ENCODE measurements at regions of chr22 and their contacts with region 1.

Region 1: GRCh38 chr22:40950962-40951794 is at the start of gene RBX1:
- DNase-seq: peak; percentile 97 to 100 (median 99)
- ATAC-seq: peak; percentile 75
- H3K4me3 ChIP-seq: peak within 1 kb of the TSS; percentile 96
- H3K4me3 Mint-ChIP-seq: peak within 1 kb of the TSS; percentile 95
- H3K27ac ChIP-seq: peak within 1 kb of the TSS; percentile 98 to 100
- H3K27ac Mint-ChIP-seq: peak within 1 kb of the TSS; percentile 98
- H3K4me1 ChIP-seq: peaks cover 34% of the 10 kb centered on the region
- H3K4me1 Mint-ChIP-seq: peaks cover 40% of the 10 kb centered on the region
- H3K27me3 ChIP-seq: no peaks in the 10 kb centered on the region
- H3K27me3 Mint-ChIP-seq: no peaks in the 10 kb centered on the region
- CTCF ChIP-seq: no peak
- total RNA-seq, gene RBX1: 19.8 to 21.6 TPM

Region 2: DNA sequence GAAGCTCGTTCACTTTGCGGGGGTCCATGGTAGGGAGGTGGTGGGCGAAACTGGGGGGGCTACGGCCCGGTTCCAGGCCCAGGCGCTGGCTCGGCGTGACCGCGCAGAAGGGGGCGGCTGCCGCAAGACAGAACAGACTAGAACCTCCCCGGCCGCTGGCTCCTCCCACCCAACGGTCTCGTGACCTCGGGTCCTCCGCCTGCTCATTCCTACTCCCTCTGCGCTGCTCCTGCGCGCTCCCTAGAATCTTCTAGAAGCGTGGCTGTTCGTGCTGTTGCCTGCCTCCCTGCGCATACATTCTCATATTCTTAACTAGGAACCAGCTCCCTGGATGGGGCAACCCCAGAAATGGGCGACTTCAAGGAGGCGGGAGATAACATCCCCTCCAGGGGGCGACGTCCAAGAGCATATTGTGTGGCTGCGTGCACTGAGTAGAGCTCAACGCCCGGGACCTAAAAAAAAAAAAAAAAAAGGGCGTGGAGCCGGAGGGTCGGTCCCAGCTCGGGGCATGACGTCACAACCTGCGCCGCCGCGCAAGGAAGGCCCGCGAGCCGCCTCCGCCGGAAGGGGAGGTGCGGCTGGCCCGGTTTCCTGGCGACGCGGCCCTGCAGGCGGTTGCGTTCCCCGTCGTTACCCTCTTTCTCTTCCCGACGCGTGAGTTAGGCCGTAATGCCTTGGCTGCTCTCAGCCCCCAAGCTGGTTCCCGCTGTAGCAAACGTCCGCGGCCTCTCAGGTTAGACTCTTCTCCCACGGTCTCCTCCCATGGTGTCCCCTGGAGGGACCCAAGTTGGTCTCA is 94.5 kb before region 1 on chr22 and contains the starts of genes ST13 and XPNPEP3:
- CTCF ChIA-PET with region 1: no interaction called
- POLR2A ChIA-PET with region 1: interaction called, 25 read pairs
- intact Hi-C with region 1: loop called (anchors 1 to 2 kb)
- DNase-seq: peak; percentile 94 to 99 (median 96)
- ATAC-seq: peak; percentile 86
- H3K4me3 ChIP-seq: peak within 1 kb of the TSS; percentile 96
- H3K4me3 Mint-ChIP-seq: peak within 1 kb of the TSS; percentile 100
- H3K27ac ChIP-seq: peak within 1 kb of the TSS; percentile 95 to 99
- H3K27ac Mint-ChIP-seq: peak within 1 kb of the TSS; percentile 100
- H3K4me1 ChIP-seq: peaks cover 22% of the 10 kb centered on the region
- H3K4me1 Mint-ChIP-seq: peaks cover 80% of the 10 kb centered on the region
- H3K27me3 ChIP-seq: no peaks in the 10 kb centered on the region
- H3K27me3 Mint-ChIP-seq: no peaks in the 10 kb centered on the region
- CTCF ChIP-seq: peak; percentile 38
- total RNA-seq, gene ST13: 164 to 170 TPM
- total RNA-seq, gene XPNPEP3: 16.3 to 17.9 TPM

Region 3: GRCh38 chr22:40890881-40891280 is 60.3 kb before region 1 on chr22:
- CTCF ChIA-PET with region 1: no interaction called
- POLR2A ChIA-PET with region 1: no interaction called
- intact Hi-C with region 1: no loop called
- DNase-seq: no peak
- ATAC-seq: no peak
- H3K4me3 ChIP-seq: no peak overlapping the region
- H3K4me3 Mint-ChIP-seq: no peak overlapping the region
- H3K27ac ChIP-seq: no peak overlapping the region
- H3K27ac Mint-ChIP-seq: no peak overlapping the region
- H3K4me1 ChIP-seq: no peaks in the 10 kb centered on the region
- H3K4me1 Mint-ChIP-seq: no peaks in the 10 kb centered on the region
- H3K27me3 ChIP-seq: no peaks in the 10 kb centered on the region
- H3K27me3 Mint-ChIP-seq: no peaks in the 10 kb centered on the region
- CTCF ChIP-seq: no peak

Region 4: GRCh38 chr22:41022470-41023298 is 71.5 kb after region 1 on chr22:
- CTCF ChIA-PET with region 1: no interaction called
- POLR2A ChIA-PET with region 1: interaction called, 93 read pairs
- intact Hi-C with region 1: loop called (anchors 1 to 5 kb)
- DNase-seq: peak; percentile 62 to 89 (median 76)
- ATAC-seq: peak; percentile 79
- H3K4me3 ChIP-seq: peak overlapping the region; percentile 63
- H3K4me3 Mint-ChIP-seq: peak overlapping the region; percentile 86
- H3K27ac ChIP-seq: peak overlapping the region; percentile 64 to 80
- H3K27ac Mint-ChIP-seq: peak overlapping the region; percentile 63
- H3K4me1 ChIP-seq: peaks cover 21% of the 10 kb centered on the region
- H3K4me1 Mint-ChIP-seq: peaks cover 20% of the 10 kb centered on the region
- H3K27me3 ChIP-seq: no peaks in the 10 kb centered on the region
- H3K27me3 Mint-ChIP-seq: no peaks in the 10 kb centered on the region
- CTCF ChIP-seq: no peak

Region 5: DNA sequence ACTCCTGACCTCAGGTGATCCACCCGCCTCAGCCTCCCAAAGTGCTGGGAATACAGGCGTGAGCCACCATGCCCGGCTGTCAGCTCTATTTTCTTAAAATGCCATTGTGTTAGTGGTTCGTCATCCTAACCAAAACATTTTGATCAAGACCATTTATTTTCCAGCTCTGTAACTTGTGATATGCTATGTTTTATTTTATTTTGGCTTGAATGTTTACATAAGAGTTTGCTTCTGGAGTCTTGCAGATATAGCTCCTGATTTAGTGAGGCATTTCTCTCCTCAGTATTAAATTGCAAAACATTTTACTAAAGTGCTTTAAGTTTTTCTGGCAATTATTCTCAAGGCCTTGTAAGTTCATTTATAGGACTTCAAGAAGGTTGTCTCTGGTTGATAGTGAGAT is 145.7 kb after region 1 on chr22:
- CTCF ChIA-PET with region 1: interaction called, 3 read pairs
- POLR2A ChIA-PET with region 1: interaction called, 187 read pairs
- intact Hi-C with region 1: no loop called
- DNase-seq: no peak
- ATAC-seq: no peak
- H3K4me3 ChIP-seq: no peak overlapping the region
- H3K4me3 Mint-ChIP-seq: peak overlapping the region; percentile 77
- H3K27ac ChIP-seq: no peak overlapping the region
- H3K27ac Mint-ChIP-seq: peak overlapping the region; percentile 75
- H3K4me1 ChIP-seq: peaks cover 39% of the 10 kb centered on the region
- H3K4me1 Mint-ChIP-seq: peaks cover 69% of the 10 kb centered on the region
- H3K27me3 ChIP-seq: no peaks in the 10 kb centered on the region
- H3K27me3 Mint-ChIP-seq: no peaks in the 10 kb centered on the region
- CTCF ChIP-seq: no peak

Region 6: DNA sequence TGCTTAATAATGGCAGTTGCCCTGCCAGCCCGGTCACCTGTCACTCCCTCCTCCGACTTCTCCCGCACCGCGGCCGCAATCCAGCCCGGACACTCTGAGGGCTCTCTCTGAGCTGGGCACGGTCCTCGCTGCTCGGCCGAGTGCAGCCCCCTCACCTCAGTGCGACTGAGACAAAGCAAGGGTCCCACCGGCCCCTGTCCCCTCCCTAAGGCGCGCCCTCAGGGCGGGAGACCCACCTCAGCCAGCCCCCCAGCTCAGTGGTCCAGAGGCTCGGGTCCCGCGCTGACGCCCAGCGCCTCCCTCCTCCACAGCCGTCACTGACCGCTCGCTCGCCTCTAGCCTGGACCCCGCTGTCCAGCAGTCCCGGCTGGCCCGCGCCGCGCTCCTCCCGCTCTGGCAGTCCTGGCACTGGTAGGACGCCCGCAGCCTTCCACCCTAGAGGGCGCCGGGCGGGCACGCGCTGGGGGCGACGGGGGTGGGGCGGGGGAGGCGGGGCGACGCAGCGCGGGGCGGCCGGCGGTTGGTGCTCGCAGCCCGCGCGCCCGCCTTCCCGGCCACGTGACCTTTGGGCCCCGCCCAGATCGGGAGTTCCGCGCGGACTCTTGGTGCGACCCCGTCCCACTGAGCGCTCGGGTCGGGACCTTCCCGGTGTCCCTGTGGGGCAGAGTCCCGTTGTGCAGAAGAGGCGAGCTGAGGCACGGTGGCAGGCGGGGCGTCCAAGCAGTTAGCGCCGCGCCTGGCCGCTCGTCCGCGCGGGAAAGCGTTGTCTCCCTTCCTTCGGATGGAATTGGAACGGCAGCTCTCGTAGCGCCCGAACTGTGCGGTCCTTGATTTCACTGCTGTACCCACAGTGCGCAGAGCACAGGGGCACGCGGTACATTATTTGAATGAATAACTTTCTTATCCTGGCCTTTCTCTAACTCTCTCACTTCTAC is 246.1 kb after region 1 on chr22:
- CTCF ChIA-PET with region 1: interaction called, 4 read pairs
- POLR2A ChIA-PET with region 1: no interaction called
- intact Hi-C with region 1: loop called in 1 of 2 experiments (anchors 2 kb)
- DNase-seq: peak; percentile 62 to 93 (median 76)
- ATAC-seq: peak; percentile 85
- H3K4me3 ChIP-seq: peak overlapping the region; percentile 92
- H3K4me3 Mint-ChIP-seq: peak overlapping the region; percentile 95
- H3K27ac ChIP-seq: no peak overlapping the region
- H3K27ac Mint-ChIP-seq: peak overlapping the region; percentile 28
- H3K4me1 ChIP-seq: peaks cover 19% of the 10 kb centered on the region
- H3K4me1 Mint-ChIP-seq: peaks cover 14% of the 10 kb centered on the region
- H3K27me3 ChIP-seq: no peaks in the 10 kb centered on the region
- H3K27me3 Mint-ChIP-seq: no peaks in the 10 kb centered on the region
- CTCF ChIP-seq: no peak

Region 7: DNA sequence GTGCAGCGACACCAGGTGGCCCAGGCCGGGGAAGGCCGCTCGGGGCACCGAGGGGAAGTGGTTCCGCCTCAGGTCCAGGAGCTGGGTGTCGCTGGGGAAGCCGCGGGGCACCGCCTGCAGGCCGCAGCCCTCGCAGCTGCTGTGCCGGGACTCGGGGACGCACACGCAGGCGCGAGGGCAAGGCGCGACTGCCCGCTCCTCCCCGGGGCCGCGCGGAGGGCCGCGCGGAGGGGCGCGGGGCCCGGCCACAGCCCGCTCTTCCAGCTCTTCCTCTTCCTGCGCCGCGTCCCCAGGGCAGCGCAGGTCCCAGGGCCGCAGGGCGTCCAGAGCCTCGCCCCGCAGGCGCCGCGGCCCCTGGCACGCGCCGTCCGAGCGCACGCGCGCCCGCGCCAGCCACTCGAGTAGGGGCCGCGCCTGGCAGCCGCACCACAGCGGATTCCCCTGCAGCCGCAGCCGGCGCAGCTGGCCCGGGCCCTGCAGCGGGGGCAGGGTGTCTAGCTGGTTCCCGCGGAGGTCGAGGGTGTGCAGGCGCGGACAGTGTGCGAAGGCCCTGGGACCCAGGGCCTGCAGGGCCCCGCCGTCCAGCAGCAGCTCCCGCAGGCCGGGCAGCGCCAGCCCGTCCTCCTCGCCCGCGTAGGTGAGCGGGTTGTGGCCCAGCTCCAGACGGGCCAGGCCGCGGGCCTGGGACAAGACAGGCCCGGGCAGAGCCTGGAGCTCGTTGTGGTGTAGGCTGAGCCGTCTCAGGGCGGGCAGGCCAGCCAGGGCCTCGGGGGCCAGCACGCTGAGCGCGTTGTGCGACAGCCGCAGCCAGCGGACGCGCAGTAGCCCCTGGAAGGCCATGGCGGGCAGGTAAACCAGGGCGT is 286.8 kb after region 1 on chr22:
- CTCF ChIA-PET with region 1: no interaction called
- POLR2A ChIA-PET with region 1: interaction called, 22 read pairs
- intact Hi-C with region 1: no loop called
- DNase-seq: peak; percentile 74 to 92 (median 84)
- ATAC-seq: peak; percentile 96
- H3K4me3 ChIP-seq: peak overlapping the region; percentile 44
- H3K4me3 Mint-ChIP-seq: peak overlapping the region; percentile 73
- H3K27ac ChIP-seq: no peak overlapping the region
- H3K27ac Mint-ChIP-seq: no peak overlapping the region
- H3K4me1 ChIP-seq: peaks cover 16% of the 10 kb centered on the region
- H3K4me1 Mint-ChIP-seq: peaks cover 5% of the 10 kb centered on the region
- H3K27me3 ChIP-seq: no peaks in the 10 kb centered on the region
- H3K27me3 Mint-ChIP-seq: no peaks in the 10 kb centered on the region
- CTCF ChIP-seq: no peak

Region 8: DNA sequence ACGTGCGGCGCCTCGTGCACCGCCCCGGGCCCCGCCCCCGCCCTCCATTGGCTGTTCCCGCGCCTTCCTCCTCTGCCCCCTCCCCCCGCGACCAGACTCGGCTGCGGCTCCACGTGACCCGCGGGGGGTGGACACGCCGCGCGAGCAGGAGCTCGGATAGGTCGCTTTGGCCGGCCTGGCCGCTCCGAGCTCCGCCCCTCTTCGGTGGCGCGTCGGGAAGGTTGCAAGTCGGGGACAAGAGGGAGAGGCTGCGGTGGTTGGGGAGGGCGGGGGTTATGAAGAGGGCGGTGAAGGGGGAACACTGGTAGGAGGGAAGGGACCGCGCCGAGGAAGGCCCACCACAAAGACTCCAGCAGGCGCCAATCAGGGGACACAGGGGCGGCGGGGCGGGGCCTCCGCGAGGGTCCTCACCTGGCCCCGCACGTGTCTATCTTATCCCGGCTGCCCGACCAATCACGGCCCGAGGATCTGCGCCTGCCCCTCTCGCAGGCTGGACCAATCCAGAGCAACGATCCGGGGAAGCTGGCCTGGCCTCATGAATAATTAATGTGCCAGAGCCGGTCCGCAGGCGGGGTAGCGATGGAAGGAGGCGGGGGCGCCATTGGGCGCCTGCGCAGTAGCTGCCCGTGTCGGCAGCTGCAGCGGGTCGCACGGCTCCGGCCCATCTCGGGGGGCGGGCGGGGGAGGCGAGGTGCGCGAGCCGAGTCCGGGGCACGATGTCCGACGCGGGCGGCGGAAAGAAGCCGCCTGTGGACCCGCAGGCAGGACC is 430.3 kb after region 1 on chr22 and contains the start of gene TEF:
- CTCF ChIA-PET with region 1: no interaction called
- POLR2A ChIA-PET with region 1: interaction called, 22 read pairs
- intact Hi-C with region 1: loop called in 1 of 2 experiments (anchors 2 kb)
- DNase-seq: peak; percentile 96 to 99 (median 98)
- ATAC-seq: peak; percentile 79
- H3K4me3 ChIP-seq: peak within 1 kb of the TSS; percentile 66
- H3K4me3 Mint-ChIP-seq: peak within 1 kb of the TSS; percentile 98
- H3K27ac ChIP-seq: peak within 1 kb of the TSS; percentile 78 to 96
- H3K27ac Mint-ChIP-seq: peak within 1 kb of the TSS; percentile 99
- H3K4me1 ChIP-seq: peaks cover 20% of the 10 kb centered on the region
- H3K4me1 Mint-ChIP-seq: peaks cover 31% of the 10 kb centered on the region
- H3K27me3 ChIP-seq: no peaks in the 10 kb centered on the region
- H3K27me3 Mint-ChIP-seq: no peaks in the 10 kb centered on the region
- CTCF ChIP-seq: no peak
- total RNA-seq, gene TEF: 2.4 to 2.6 TPM